ENCODE measurements at regions of chr10 and their contacts with region 1.

Region 1: DNA sequence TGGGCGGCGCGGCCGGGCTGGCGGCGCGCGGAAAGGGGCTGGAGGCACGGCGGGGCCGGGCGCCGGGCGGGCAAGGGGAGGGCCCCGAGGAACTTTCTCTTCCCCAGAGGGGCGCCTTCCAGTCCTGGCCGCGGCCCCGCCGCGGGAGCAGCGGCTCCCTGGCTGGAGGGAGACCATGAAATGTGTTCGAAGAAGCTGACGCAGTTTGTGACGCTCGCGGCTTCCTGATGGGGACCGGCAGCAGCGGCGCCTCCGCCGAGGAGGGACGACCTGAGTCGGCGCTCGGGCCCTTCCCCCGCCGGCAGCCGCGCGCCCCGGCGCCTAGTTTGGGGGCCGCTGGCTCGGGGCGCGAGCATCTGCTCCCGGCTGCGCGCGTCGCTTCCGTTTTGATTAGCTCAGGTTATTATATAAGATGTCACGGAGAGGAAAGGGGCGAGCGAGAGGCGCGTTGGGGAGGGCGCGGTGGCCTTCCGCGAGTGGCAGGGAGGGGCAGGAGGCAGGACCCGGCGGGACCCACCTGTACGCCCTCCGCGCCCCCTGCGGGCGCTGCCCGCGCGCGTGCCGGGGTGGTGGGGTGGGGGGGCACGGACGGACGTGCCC is 57.1 kb upstream of the PCGF5 start:
- DNase-seq: peak; percentile 41
- ATAC-seq: peak; percentile 75
- H3K4me3 ChIP-seq: peak overlapping the region; percentile 91 to 93 (median 93)
- H3K27ac ChIP-seq: peak overlapping the region; percentile 98
- H3K4me1 ChIP-seq: peaks cover 40% of the 10 kb centered on the region
- H3K27me3 ChIP-seq: no peaks in the 10 kb centered on the region
- CTCF ChIP-seq: peak; percentile 4; the same call in 1 of the 2 replicates
- EP300 ChIP-seq: no peak; a peak in 1 of 4 replicates
- POLR2A ChIP-seq: peak; percentile 61 to 80
- RAD21 ChIP-seq: peak; percentile 48

Region 2: DNA sequence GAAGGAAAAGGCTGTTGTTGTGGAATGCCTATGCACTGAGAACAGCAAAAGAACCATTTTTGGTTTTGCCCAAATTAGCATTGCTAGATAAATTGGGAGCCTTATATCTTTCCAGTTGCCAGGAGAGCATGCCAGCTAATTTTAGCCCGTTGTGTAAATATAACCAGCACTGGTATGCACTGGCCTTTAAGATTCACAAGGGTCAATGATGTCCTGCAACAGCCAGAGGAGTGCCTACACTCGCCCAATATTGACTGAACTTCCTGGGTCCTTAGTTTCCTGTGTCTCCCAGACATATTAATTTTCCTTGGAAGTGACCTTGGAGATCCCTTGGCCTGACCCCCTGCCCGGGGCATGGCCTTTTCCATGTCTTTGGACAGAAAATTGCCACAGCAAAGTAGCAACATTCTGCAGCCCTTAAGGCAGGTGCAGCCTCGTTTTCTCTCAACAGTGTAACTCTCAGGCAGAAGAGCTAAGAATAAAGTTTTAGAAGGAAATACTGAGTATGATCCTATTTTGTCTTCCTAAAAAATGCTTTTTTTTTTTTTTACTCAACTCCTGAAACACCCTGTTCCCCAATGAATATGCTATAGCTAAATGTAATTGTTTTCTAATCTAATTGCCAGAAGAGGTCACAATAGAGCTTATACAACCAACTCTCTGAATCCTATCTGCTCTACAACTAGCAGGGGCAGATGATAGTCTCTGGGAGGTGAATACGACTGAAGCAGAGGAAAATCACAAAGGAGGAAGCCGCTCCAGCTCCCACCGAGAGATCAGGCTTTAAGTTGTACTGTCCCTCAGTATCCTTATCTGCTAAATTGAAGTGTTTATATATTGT is 74.8 kb before region 1 on chr10:
- CTCF ChIA-PET with region 1: no interaction called
- POLR2A ChIA-PET with region 1: no interaction called
- in situ Hi-C with region 1: no loop called
- intact Hi-C with region 1: loop called (anchors 5 kb)
- DNase-seq: peak; percentile 30
- ATAC-seq: peak; percentile 86
- H3K4me3 ChIP-seq: no peak overlapping the region
- H3K27ac ChIP-seq: no peak overlapping the region
- H3K4me1 ChIP-seq: no peaks in the 10 kb centered on the region
- H3K27me3 ChIP-seq: no peaks in the 10 kb centered on the region
- CTCF ChIP-seq: peak; percentile 61
- EP300 ChIP-seq: no peak
- POLR2A ChIP-seq: no peak
- RAD21 ChIP-seq: no peak

Region 3: DNA sequence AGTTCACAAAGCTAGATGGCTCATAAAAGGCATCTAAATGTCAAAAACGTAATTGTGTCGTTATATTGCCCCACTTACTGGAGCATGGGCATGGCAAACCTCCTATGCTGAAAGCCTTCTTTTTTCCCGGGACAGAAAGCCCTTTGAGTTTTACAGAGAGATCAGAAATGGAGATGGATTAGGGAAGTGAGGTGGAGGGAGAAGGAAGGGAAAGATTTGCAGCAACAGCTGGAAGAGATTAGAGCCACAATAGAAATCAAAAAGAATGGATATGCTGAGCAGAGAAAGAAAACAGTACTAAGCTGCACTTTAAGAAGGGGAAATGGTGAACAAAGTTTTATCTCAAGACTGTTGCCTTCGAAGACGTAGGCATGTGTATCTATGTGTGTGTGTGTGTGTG is 40.1 kb before region 1 on chr10:
- CTCF ChIA-PET with region 1: no interaction called
- POLR2A ChIA-PET with region 1: no interaction called
- in situ Hi-C with region 1: no loop called
- intact Hi-C with region 1: no loop called
- DNase-seq: no peak
- ATAC-seq: no peak
- H3K4me3 ChIP-seq: no peak overlapping the region
- H3K27ac ChIP-seq: no peak overlapping the region
- H3K4me1 ChIP-seq: no peaks in the 10 kb centered on the region
- H3K27me3 ChIP-seq: peaks cover 0 to 11% of the 10 kb centered on the region in 2 experiments; a peak in 2 of 5 replicates
- CTCF ChIP-seq: no peak
- EP300 ChIP-seq: no peak
- POLR2A ChIP-seq: no peak
- RAD21 ChIP-seq: no peak

Region 4: GRCh38 chr10:91140995-91141549 is 22.3 kb before region 1 on chr10:
- CTCF ChIA-PET with region 1: no interaction called
- POLR2A ChIA-PET with region 1: no interaction called
- in situ Hi-C with region 1: no loop called
- intact Hi-C with region 1: no loop called
- DNase-seq: no peak
- ATAC-seq: no peak
- H3K4me3 ChIP-seq: no peak overlapping the region
- H3K27ac ChIP-seq: no peak overlapping the region
- H3K4me1 ChIP-seq: no peaks in the 10 kb centered on the region
- H3K27me3 ChIP-seq: no peaks in the 10 kb centered on the region
- CTCF ChIP-seq: no peak
- EP300 ChIP-seq: no peak
- POLR2A ChIP-seq: no peak
- RAD21 ChIP-seq: no peak

Region 5: GRCh38 chr10:91206427-91206826 is 43.1 kb after region 1 on chr10:
- CTCF ChIA-PET with region 1: no interaction called
- POLR2A ChIA-PET with region 1: interaction called, 4 read pairs
- in situ Hi-C with region 1: no loop called
- intact Hi-C with region 1: loop called (anchors 1 kb)
- DNase-seq: peak; percentile 57
- ATAC-seq: peak; percentile 96
- H3K4me3 ChIP-seq: no peak overlapping the region
- H3K27ac ChIP-seq: peak overlapping the region; percentile 34
- H3K4me1 ChIP-seq: peaks cover 60% of the 10 kb centered on the region
- H3K27me3 ChIP-seq: no peaks in the 10 kb centered on the region
- CTCF ChIP-seq: peak; percentile 28
- EP300 ChIP-seq: peak in 1 of 2 experiments; percentile 22; a peak in 1 of 4 replicates
- POLR2A ChIP-seq: no peak
- RAD21 ChIP-seq: no peak

Region 6: DNA sequence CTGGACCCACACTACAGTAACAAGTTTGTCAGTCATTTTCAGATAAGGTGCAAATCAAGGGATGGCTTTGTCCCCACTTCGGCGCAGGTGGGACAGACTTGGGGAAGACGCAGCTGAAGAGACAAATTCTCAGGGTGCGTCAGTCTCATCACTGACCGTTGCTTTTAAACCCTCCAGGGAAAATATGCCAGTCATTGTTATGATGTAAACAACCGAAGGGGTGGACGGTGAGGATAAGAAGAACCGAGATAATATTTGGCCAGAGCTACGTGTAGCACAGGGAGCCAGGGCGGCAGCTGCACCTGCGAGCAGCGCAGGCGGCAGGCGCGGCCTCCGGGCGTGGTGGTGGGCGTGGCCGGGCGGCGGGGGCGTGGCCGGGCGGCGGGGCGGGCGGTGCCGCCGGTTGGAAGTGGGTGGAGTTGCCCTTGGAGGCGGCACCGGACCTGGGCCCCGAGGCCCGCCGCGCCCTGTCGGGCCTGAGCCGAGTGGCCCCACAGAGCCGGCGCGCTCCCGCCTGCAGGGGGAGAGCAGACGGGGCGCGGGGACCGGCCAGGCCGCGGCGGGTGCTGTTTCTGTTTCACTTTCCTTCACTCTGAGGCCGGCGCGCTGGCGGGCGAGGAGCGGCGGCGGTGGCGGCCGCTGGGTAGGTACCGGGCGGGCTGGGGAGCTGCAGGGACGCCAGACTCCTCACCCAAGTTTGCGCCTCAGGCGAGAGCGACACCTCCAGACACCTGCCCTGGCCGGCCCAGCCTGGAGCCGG is 57.0 kb after region 1 on chr10 and contains the start of gene PCGF5:
- CTCF ChIA-PET with region 1: no interaction called
- POLR2A ChIA-PET with region 1: interaction called, 52 read pairs
- in situ Hi-C with region 1: loop called (anchors 5 kb)
- intact Hi-C with region 1: loop called (anchors 1 kb)
- DNase-seq: no peak
- ATAC-seq: peak; percentile 94
- H3K4me3 ChIP-seq: peak within 1 kb of the TSS; percentile 90 to 96 (median 90)
- H3K27ac ChIP-seq: peak within 1 kb of the TSS; percentile 100
- H3K4me1 ChIP-seq: peaks cover 78% of the 10 kb centered on the region
- H3K27me3 ChIP-seq: no peaks in the 10 kb centered on the region
- CTCF ChIP-seq: peak; percentile 39; the same call in 1 of the 2 replicates
- EP300 ChIP-seq: no peak
- POLR2A ChIP-seq: peak; percentile 79 to 81
- RAD21 ChIP-seq: peak; percentile 76
- total RNA-seq, gene PCGF5: 61.3 and 74.8 TPM in 2 replicates